Activated CD4-positive, alpha-beta T cell treated with anti-CD3 and anti-CD28 coated beads, Interleukin-2, amount 10 ng/mL, durations not matched to agents 24 days and 14 days (primary cell): ENCODE measurements at regions of chr18 and their contacts with region 1.

Region 1: GRCh38 chr18:12990967-12991838 is at the start of gene CEP192:
- DNase-seq: peak; percentile 99
- H3K4me3 Mint-ChIP-seq: peak within 1 kb of the TSS; percentile 94
- H3K27ac Mint-ChIP-seq: peak within 1 kb of the TSS; percentile 92
- H3K4me1 Mint-ChIP-seq: peaks cover 16% of the 10 kb centered on the region
- H3K27me3 Mint-ChIP-seq: no peaks in the 10 kb centered on the region
- total RNA-seq, gene CEP192: 31.4 and 34.7 TPM in 2 replicates

Region 2: GRCh38 chr18:12811191-12811950 is 179.8 kb before region 1 on chr18:
- intact Hi-C with region 1: no loop called
- DNase-seq: no peak
- H3K4me3 Mint-ChIP-seq: no peak overlapping the region
- H3K27ac Mint-ChIP-seq: no peak overlapping the region
- H3K4me1 Mint-ChIP-seq: peaks cover 7% of the 10 kb centered on the region
- H3K27me3 Mint-ChIP-seq: no peaks in the 10 kb centered on the region

Region 3: DNA sequence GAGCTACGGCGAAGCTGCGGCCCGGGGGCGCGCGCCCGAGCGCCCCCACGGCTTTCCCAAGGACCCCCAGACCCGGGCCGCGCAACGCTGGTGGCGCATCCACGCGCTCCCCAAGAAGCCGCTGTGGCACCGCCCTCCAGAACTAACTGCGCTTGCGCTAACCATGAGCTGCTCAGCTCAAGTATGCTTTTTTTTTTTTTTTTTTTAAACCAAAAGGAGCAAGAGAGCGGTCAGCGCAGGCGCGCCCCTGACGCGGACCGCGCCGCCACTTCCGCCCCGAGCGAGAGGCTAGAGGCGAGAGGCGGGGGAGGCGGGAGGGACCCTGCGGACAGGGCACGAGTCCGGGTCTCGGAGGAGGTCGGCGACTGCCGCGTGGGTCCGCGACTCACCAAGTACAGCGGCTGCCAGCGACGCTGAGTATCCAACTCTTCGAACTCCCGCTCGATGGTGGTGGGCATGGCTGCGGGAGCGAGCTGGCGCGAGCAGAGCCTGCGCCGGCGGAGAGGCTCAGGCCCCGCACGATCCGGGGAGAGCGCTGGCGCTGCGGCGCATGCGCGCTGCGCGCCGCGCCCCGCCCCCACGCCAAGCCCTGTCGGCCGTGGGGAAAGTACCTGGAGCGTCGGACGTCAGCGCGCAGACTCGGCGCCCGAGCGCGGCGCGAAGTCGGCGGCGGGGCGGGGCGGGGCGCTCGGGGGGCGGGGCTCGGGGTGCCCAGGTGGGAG is 107.4 kb before region 1 on chr18 and contains the start of gene PTPN2:
- intact Hi-C with region 1: loop called (anchors 1 kb)
- DNase-seq: peak; percentile 97
- H3K4me3 Mint-ChIP-seq: peak within 1 kb of the TSS; percentile 90
- H3K27ac Mint-ChIP-seq: peak within 1 kb of the TSS; percentile 94
- H3K4me1 Mint-ChIP-seq: peaks cover 57% of the 10 kb centered on the region
- H3K27me3 Mint-ChIP-seq: no peaks in the 10 kb centered on the region
- total RNA-seq, gene PTPN2: 68.8 and 72.5 TPM in 2 replicates

Region 4: DNA sequence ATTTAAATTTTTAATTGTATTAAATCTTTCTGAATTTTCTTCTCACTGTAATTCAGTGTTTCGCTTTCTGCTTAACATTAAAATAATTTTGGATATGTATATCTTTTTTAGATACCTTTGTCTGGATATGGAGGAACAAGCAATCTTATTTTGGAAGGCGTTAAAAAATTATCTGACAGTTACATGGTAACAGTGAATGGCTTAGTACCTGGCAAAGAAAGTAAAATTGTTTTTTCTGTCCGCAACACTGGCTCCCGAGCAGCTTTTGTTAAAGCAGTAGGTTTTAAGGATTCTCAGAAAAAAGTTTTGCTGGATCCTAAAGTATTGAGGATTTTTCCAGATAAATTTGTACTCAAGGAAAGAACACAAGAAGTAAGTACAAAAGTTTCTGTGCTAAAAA is 95.7 kb after region 1 on chr18:
- intact Hi-C with region 1: no loop called
- DNase-seq: no peak
- H3K4me3 Mint-ChIP-seq: no peak overlapping the region
- H3K27ac Mint-ChIP-seq: no peak overlapping the region
- H3K4me1 Mint-ChIP-seq: peaks cover 5% of the 10 kb centered on the region
- H3K27me3 Mint-ChIP-seq: no peaks in the 10 kb centered on the region

Region 5: DNA sequence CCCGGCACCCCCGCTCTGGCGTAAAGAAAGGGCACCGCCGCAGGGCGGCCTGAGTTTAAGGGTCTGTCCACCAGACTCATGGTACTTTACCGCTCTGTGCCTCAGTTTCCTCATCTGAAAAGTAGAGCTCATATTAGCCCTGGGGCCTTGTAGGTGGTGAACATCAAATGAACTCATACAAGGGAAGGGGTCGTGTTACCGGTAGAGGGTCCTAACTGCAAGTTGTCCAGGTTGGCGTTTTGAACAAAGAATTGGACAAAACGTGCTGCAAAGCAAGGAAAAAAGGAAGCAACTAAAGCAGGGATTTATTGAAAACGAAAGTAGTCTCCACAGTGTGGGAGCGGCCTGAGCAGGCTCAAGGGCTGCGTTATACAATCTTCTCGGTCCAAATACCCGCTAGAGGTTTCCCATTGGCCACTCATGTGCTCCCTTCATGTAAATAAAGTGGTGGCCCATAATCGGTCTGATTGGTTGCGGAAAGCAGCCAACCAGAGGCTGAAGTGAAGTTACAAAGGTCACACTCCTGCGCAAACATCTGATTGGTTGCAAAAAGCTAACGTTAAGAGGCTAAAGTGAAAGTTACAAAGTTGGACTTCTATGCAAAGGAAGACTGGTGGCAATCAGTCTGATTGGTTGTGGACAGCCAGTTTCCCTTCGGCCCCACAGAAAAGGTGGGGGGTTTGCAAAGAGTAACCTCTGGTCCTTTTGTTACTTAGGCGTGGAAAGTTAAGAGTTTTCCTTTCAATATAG is 146.6 kb after region 1 on chr18:
- intact Hi-C with region 1: loop called (anchors 1 kb)
- DNase-seq: peak; percentile 93
- H3K4me3 Mint-ChIP-seq: peak overlapping the region; percentile 99
- H3K27ac Mint-ChIP-seq: peak overlapping the region; percentile 93
- H3K4me1 Mint-ChIP-seq: peaks cover 15% of the 10 kb centered on the region
- H3K27me3 Mint-ChIP-seq: peaks cover 14% of the 10 kb centered on the region

Region 6: GRCh38 chr18:13268158-13269012 is 277.2 kb after region 1 on chr18:
- intact Hi-C with region 1: no loop called
- DNase-seq: no peak
- H3K4me3 Mint-ChIP-seq: peak overlapping the region; percentile 76
- H3K27ac Mint-ChIP-seq: peak overlapping the region; percentile 90
- H3K4me1 Mint-ChIP-seq: peaks cover 64% of the 10 kb centered on the region
- H3K27me3 Mint-ChIP-seq: no peaks in the 10 kb centered on the region